ENCODE measurements at regions of chr19 and their contacts with region 1.

Region 1: DNA sequence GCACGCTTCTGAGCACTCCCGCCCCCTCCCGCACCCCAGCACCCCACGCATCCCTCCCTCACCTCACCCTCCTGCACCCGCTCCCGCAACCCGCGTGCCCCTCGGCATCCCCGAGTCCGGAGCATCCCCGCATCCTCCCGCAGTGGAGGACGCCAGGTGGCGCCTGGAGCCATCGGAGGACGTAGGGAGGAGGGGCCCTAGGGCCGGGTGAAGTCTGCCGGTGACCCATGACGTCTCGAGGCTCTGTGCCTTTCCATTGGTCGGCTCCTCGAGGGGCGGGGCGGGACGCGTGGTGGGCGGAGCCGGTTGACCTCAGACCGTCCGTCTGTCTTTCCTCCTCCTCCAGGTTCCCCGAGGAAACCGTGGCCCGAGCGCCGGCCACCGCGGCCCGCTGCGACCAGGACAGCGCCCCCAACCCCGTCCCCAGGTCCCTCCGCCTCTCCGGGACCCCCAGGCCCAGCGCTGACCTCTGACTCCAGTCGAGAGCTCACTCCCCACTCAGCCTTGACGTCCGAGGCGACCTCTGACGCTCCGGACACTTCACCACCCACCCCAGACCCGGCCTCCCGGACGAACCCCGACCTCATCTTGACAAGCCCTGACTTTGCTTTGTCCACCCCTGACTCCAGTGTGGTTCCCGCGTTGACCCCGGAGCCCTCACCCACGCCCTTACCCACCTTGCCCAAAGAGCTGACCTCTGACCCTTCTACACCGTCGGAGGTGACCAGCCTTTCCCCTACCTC is 19.9 kb downstream of the SBK2 start:
- DNase-seq: peak; percentile 93 to 95
- ATAC-seq: peak; percentile 100

Region 2: DNA sequence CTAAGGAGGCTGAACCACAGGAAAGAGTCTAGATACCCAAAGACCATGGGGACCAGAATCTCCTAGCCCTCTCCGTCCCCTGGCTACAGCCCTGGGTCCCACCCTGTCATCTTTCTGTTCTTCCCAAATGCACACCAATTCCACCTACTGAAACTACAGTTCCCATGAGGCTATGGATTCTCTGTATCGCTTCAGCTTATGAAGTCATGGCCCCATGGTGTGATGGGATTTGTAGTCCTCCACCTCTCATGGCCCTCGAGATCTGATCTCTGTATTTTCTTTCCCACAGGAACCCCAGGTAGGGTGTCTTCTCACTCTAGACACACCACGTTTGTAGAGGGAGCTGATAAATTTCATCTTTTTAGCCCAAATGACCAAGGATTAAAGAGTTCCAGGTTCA is 319.5 kb before region 1 on chr19:
- intact Hi-C with region 1: no loop called
- DNase-seq: no peak
- ATAC-seq: peak; percentile 18

Region 3: GRCh38 chr19:55385740-55386529 is 131.1 kb before region 1 on chr19 and contains the start of gene RPL28:
- intact Hi-C with region 1: no loop called
- DNase-seq: peak; percentile 98
- ATAC-seq: peak; percentile 73
- total RNA-seq, gene RPL28: 1,151 to 1,179 TPM

Region 4: GRCh38 chr19:55580628-55581144 is 63.6 kb after region 1 on chr19 and contains the start of gene ZNF579:
- intact Hi-C with region 1: no loop called
- DNase-seq: peak; percentile 85 to 87
- ATAC-seq: peak; percentile 86
- total RNA-seq, gene ZNF579: 5.3 to 7.3 TPM

Region 5: GRCh38 chr19:55599468-55600279 is 82.6 kb after region 1 on chr19 and contains the start of gene FIZ1:
- intact Hi-C with region 1: loop called in 1 of 2 experiments (anchors 10 kb)
- DNase-seq: peak; percentile 97 to 98
- ATAC-seq: peak; percentile 85
- total RNA-seq, gene FIZ1: 14.7 to 15.5 TPM

Region 6: DNA sequence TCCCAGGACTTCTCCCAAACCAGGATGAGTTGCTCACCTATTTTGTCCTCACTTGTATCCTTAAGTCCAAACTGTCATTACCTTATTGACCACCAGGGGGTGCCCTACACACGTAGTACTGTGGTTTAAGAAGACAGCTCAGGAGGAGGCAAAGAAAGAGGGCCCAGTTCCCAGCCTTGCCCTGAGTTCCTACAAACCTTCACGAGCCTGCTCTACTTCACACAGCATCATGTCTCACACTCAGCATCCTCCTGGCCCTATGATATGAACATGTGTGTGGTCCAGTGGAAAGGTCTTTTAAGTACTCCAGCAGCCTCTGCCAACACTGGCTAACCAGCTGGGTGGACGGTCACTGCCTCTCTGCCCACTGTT is 115.4 kb after region 1 on chr19:
- intact Hi-C with region 1: loop called in 1 of 2 experiments (anchors 10 kb)
- DNase-seq: peak; percentile 90 to 94
- ATAC-seq: peak; percentile 66